ENCODE measurements at regions of chr3 and their contacts with region 1.

Region 1: GRCh38 chr3:180617049-180617448 is 15.1 kb downstream of the TTC14 start:
- DNase-seq: no peak
- H3K4me3 ChIP-seq: no peak overlapping the region
- H3K27ac ChIP-seq: no peak overlapping the region
- H3K4me1 ChIP-seq: no peaks in the 10 kb centered on the region
- H3K27me3 ChIP-seq: no peaks in the 10 kb centered on the region
- CTCF ChIP-seq: no peak
- EP300 ChIP-seq: no peak
- POLR2A ChIP-seq: no peak
- RAD21 ChIP-seq: no peak

Region 2: GRCh38 chr3:180601688-180602666 is 15.1 kb before region 1 on chr3 and contains the start of gene TTC14:
- CTCF ChIA-PET with region 1: no interaction called
- POLR2A ChIA-PET with region 1: interaction called, 11 read pairs
- DNase-seq: peak; percentile 88 to 89
- H3K4me3 ChIP-seq: peak within 1 kb of the TSS; percentile 82 to 97 (median 92)
- H3K27ac ChIP-seq: no peak within 1 kb of the TSS
- H3K4me1 ChIP-seq: no peaks in the 10 kb centered on the region; a peak in 1 of 7 replicates
- H3K27me3 ChIP-seq: no peaks in the 10 kb centered on the region
- CTCF ChIP-seq: 0 out of 4 replicates have a peak, but pooled peaks of 1 of the 3 experiments have one; percentile 3
- EP300 ChIP-seq: no peak
- POLR2A ChIP-seq: peak; percentile 83 to 88
- RAD21 ChIP-seq: peak; percentile 8 to 29; a peak in 2 of 4 replicates
- total RNA-seq, gene TTC14: 19.4 and 22.3 TPM in 2 replicates

Region 3: DNA sequence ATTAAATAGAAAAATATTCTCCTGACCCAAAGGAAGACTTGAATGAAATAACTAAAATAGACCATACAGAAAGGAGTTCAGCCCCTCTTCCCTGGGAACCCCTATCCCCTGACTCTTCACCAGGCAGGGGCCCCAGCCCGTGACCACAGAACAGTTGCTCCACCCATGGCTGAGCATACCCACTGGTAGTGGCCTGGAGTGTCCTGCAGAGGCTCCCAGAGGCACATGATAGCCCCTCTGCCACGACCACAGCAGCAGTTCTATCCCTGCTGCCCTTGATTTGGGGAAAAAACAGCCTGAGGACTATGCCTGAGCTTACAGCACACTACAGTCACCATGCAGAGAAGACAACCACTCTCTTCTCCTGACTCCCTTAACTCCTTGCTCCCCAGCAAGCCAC is 16.7 kb after region 1 on chr3:
- CTCF ChIA-PET with region 1: interaction called, 12 read pairs
- POLR2A ChIA-PET with region 1: no interaction called
- DNase-seq: no peak
- H3K4me3 ChIP-seq: no peak overlapping the region
- H3K27ac ChIP-seq: no peak overlapping the region
- H3K4me1 ChIP-seq: no peaks in the 10 kb centered on the region
- H3K27me3 ChIP-seq: no peaks in the 10 kb centered on the region
- CTCF ChIP-seq: peak; percentile 37 to 48 (median 47)
- EP300 ChIP-seq: no peak
- POLR2A ChIP-seq: no peak
- RAD21 ChIP-seq: peak; percentile 67 to 69